K562 (cell line): ENCODE measurements at regions of chr6 and their contacts with region 1.

Region 1: DNA sequence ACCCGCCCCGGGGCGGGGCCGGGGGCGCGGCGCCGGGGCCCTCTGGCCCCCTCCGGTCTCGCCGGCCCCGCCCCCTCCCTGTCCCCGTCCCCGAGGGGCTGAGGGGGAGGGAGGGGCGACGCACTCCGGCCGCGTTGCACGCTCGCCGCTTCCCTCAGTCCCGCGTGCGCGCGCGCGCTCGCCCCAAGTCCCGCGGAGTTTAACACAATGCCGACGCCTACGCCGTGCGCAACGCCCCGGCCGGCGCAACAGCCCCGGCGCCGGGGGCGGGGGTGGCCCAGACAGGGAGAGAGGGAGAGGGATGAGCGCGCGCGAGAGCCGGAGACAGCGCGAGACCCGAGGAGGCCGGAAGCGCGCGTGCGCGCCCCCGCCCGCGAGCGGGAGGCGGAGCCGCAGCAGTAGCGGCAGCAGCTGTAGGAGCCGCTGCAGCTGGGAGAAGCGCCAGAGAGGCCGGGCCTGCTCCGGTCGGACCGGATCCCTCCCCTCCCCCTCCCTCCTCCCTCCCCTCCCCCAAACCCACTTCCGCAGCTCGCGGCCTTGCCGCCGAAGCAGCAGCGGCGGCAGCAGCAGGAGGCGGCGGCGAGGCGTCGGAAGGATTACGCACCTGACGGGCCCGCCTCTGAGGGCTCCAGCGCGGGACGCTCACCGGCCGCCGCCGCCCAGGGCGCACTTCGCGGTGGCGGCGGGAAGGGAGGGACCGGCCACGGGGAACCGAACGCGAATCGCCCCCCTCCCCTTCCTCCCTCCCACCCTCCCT is 905 bp downstream of the ZBTB2 start:
- DNase-seq: peak; percentile 97 to 100 (median 98)
- ATAC-seq: peak; percentile 90
- H3K4me3 ChIP-seq: peak overlapping the region; percentile 93
- H3K27ac ChIP-seq: peak overlapping the region; percentile 96
- H3K4me1 ChIP-seq: peaks cover 10 to 30% of the 10 kb centered on the region in 2 experiments; a peak in 4 of 5 replicates
- H3K27me3 ChIP-seq: no peaks in the 10 kb centered on the region
- CTCF ChIP-seq: peak in 2 of 3 experiments; percentile 30 to 39; a peak in 4 of 6 replicates
- EP300 ChIP-seq: no peak
- POLR2A ChIP-seq: peak; percentile 74
- RAD21 ChIP-seq: no peak

Region 2: DNA sequence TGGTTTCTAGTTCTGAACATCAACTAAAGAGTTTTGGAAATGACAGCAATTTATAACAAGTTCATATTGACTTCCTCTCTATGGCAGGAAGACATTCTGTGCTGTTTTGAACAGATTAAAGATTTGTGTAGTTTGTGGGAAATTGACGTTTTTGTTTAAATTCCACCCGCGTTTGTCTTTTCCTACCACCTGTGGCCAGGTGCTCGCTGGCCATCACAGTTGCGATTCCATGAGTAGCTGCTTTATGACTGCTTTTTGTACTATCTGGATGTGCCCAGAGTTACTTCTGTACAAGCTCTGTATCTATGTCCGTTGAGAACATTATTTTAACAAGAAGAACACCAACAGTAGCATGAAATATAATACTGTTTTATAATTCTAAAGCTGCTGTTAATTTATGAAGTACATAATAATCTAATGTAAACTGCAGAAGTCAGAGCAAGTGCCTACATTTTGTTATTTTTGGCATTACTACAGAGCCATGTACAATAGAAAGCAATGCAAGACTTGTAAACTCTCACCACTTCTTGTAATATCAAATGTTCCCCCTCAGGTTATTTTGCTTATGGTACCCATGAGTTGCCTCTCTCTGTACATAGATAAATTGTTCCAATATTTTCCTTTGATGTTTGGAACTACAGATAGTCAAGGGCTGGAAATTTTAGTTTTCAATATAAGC is 32.6 kb before region 1 on chr6:
- CTCF ChIA-PET with region 1: no interaction called
- POLR2A ChIA-PET with region 1: interaction called, 3 read pairs
- in situ Hi-C with region 1: no loop called
- intact Hi-C with region 1: loop called (anchors 2 kb)
- DNase-seq: no peak
- ATAC-seq: no peak
- H3K4me3 ChIP-seq: no peak overlapping the region
- H3K27ac ChIP-seq: no peak overlapping the region
- H3K4me1 ChIP-seq: peaks cover 0 to 2% of the 10 kb centered on the region in 2 experiments; a peak in 2 of 5 replicates
- H3K27me3 ChIP-seq: peaks cover 5 to 11% of the 10 kb centered on the region in 2 experiments; a peak in 4 of 5 replicates
- CTCF ChIP-seq: no peak
- EP300 ChIP-seq: no peak
- POLR2A ChIP-seq: no peak
- RAD21 ChIP-seq: no peak

Region 3: GRCh38 chr6:151374036-151374683 is 16.3 kb before region 1 on chr6:
- CTCF ChIA-PET with region 1: no interaction called
- POLR2A ChIA-PET with region 1: interaction called, 12 read pairs
- in situ Hi-C with region 1: no loop called
- intact Hi-C with region 1: loop called (anchors 2 kb)
- DNase-seq: peak; percentile 32 to 78 (median 46)
- ATAC-seq: peak; percentile 91
- H3K4me3 ChIP-seq: no peak overlapping the region; the same call in 1 of the 2 replicates
- H3K27ac ChIP-seq: peak overlapping the region; percentile 51
- H3K4me1 ChIP-seq: peaks cover 6 to 7% of the 10 kb centered on the region in 2 experiments; a peak in 4 of 5 replicates
- H3K27me3 ChIP-seq: no peaks in the 10 kb centered on the region
- CTCF ChIP-seq: no peak
- EP300 ChIP-seq: no peak
- POLR2A ChIP-seq: no peak
- RAD21 ChIP-seq: no peak

Region 4: GRCh38 chr6:151409260-151409659 is 18.8 kb after region 1 on chr6:
- CTCF ChIA-PET with region 1: no interaction called
- POLR2A ChIA-PET with region 1: interaction called, 10 read pairs
- in situ Hi-C with region 1: no loop called
- intact Hi-C with region 1: no loop called
- DNase-seq: no peak
- ATAC-seq: no peak
- H3K4me3 ChIP-seq: no peak overlapping the region
- H3K27ac ChIP-seq: no peak overlapping the region
- H3K4me1 ChIP-seq: no peaks in the 10 kb centered on the region
- H3K27me3 ChIP-seq: no peaks in the 10 kb centered on the region
- CTCF ChIP-seq: no peak
- EP300 ChIP-seq: no peak
- POLR2A ChIP-seq: no peak
- RAD21 ChIP-seq: no peak

Region 5: GRCh38 chr6:151451950-151452749 is 61.7 kb after region 1 on chr6 and contains the start of gene RMND1:
- CTCF ChIA-PET with region 1: no interaction called
- POLR2A ChIA-PET with region 1: interaction called, 18 read pairs
- in situ Hi-C with region 1: no loop called
- intact Hi-C with region 1: loop called (anchors 2 kb)
- DNase-seq: peak; percentile 99 to 100 (median 99)
- ATAC-seq: peak; percentile 97
- H3K4me3 ChIP-seq: peak within 1 kb of the TSS; percentile 75
- H3K27ac ChIP-seq: peak within 1 kb of the TSS; percentile 78
- H3K4me1 ChIP-seq: peaks cover 0 to 7% of the 10 kb centered on the region in 2 experiments; a peak in 4 of 5 replicates
- H3K27me3 ChIP-seq: no peaks in the 10 kb centered on the region
- CTCF ChIP-seq: no peak
- EP300 ChIP-seq: peak; percentile 73
- POLR2A ChIP-seq: peak; percentile 94
- RAD21 ChIP-seq: no peak
- polyA plus RNA-seq, gene RMND1: 36.2 to 38.4 TPM

Region 6: GRCh38 chr6:151576633-151577032 is 186.2 kb after region 1 on chr6:
- CTCF ChIA-PET with region 1: no interaction called
- POLR2A ChIA-PET with region 1: no interaction called
- in situ Hi-C with region 1: no loop called
- intact Hi-C with region 1: no loop called
- DNase-seq: no peak
- ATAC-seq: no peak
- H3K4me3 ChIP-seq: no peak overlapping the region
- H3K27ac ChIP-seq: no peak overlapping the region
- H3K4me1 ChIP-seq: no peaks in the 10 kb centered on the region
- H3K27me3 ChIP-seq: peaks cover 26 to 29% of the 10 kb centered on the region in 2 experiments
- CTCF ChIP-seq: no peak
- EP300 ChIP-seq: no peak
- POLR2A ChIP-seq: no peak
- RAD21 ChIP-seq: no peak

Region 7: GRCh38 chr6:151914475-151914874 is 524.0 kb after region 1 on chr6:
- CTCF ChIA-PET with region 1: no interaction called
- POLR2A ChIA-PET with region 1: no interaction called
- in situ Hi-C with region 1: no loop called
- intact Hi-C with region 1: no loop called
- DNase-seq: no peak
- ATAC-seq: no peak
- H3K4me3 ChIP-seq: no peak overlapping the region
- H3K27ac ChIP-seq: no peak overlapping the region
- H3K4me1 ChIP-seq: no peaks in the 10 kb centered on the region
- H3K27me3 ChIP-seq: no peaks in the 10 kb centered on the region
- CTCF ChIP-seq: no peak
- EP300 ChIP-seq: no peak
- POLR2A ChIP-seq: no peak
- RAD21 ChIP-seq: no peak

Region 8: GRCh38 chr6:153002607-153003365 is 1612.3 kb after region 1 on chr6 and contains the start of gene MTRF1L:
- CTCF ChIA-PET with region 1: no interaction called
- POLR2A ChIA-PET with region 1: no interaction called
- in situ Hi-C with region 1: no loop called
- intact Hi-C with region 1: loop called (anchors 5 kb)
- DNase-seq: peak; percentile 94 to 100 (median 95)
- ATAC-seq: peak; percentile 92
- H3K4me3 ChIP-seq: peak within 1 kb of the TSS; percentile 89
- H3K27ac ChIP-seq: peak within 1 kb of the TSS; percentile 88
- H3K4me1 ChIP-seq: peaks cover 0 to 3% of the 10 kb centered on the region in 2 experiments; a peak in 2 of 5 replicates
- H3K27me3 ChIP-seq: no peaks in the 10 kb centered on the region; a peak in 1 of 5 replicates
- CTCF ChIP-seq: 0 out of 6 replicates have a peak, but pooled peaks of 1 of the 3 experiments have one; percentile 2
- EP300 ChIP-seq: no peak
- POLR2A ChIP-seq: peak; percentile 89
- RAD21 ChIP-seq: no peak
- polyA plus RNA-seq, gene MTRF1L: 10.7 to 13.7 TPM